Activated CD4-positive, alpha-beta T cell treated with anti-CD3 and anti-CD28 coated beads, Interleukin-2, amount 10 ng/mL, durations not matched to agents 24 days and 14 days (primary cell): ENCODE measurements at regions of chr19 and their contacts with region 1.

Region 1: GRCh38 chr19:7799640-7800355 is 30.2 kb upstream of the EVI5L start:
- DNase-seq: peak; percentile 90
- H3K4me3 Mint-ChIP-seq: no peak overlapping the region
- H3K27ac Mint-ChIP-seq: no peak overlapping the region
- H3K4me1 Mint-ChIP-seq: peaks cover 4% of the 10 kb centered on the region
- H3K27me3 Mint-ChIP-seq: peaks cover 51% of the 10 kb centered on the region

Region 2: GRCh38 chr19:7348587-7349230 is 451.1 kb before region 1 on chr19 and contains the start of gene ARHGEF18:
- intact Hi-C with region 1: loop called (anchors 10 kb)
- DNase-seq: peak; percentile 85
- H3K4me3 Mint-ChIP-seq: peak within 1 kb of the TSS; percentile 94
- H3K27ac Mint-ChIP-seq: peak within 1 kb of the TSS; percentile 95
- H3K4me1 Mint-ChIP-seq: peaks cover 57% of the 10 kb centered on the region
- H3K27me3 Mint-ChIP-seq: no peaks in the 10 kb centered on the region
- total RNA-seq, gene ARHGEF18: 30.6 and 34.8 TPM in 2 replicates

Region 3: GRCh38 chr19:7562646-7563393 is 237.0 kb before region 1 on chr19:
- intact Hi-C with region 1: loop called (anchors 1 kb)
- DNase-seq: peak; percentile 70
- H3K4me3 Mint-ChIP-seq: no peak overlapping the region
- H3K27ac Mint-ChIP-seq: no peak overlapping the region
- H3K4me1 Mint-ChIP-seq: no peaks in the 10 kb centered on the region
- H3K27me3 Mint-ChIP-seq: no peaks in the 10 kb centered on the region

Region 4: DNA sequence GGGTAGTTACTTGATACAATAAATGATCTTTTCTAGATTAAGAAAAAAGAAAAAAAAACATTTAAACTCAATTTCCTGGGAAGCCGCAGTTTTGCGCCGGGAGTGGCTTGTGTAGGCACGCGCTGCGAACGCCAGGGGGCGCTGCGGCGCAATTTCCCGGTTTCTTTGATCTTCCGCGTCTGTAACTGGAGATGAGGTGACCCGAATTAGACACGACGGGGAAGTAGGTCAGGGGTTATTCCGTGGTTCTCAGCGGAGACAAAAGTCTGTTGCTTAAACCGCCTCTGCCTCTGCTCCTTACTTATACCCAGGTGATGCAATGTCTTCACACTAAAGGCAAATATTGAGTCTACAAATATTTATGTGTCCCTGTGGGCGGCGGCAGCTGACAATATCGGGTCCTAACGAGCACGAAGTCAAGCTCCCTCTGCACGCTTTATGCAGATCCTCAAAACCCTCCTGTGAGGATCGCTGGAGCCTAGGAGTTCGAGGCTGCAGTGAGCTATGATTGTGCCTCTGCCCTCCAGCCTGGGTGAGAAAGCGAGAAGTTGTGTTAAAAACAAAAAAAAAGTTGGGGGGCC is 147.6 kb before region 1 on chr19:
- intact Hi-C with region 1: loop called (anchors 1 kb)
- DNase-seq: peak; percentile 96
- H3K4me3 Mint-ChIP-seq: peak overlapping the region; percentile 71
- H3K27ac Mint-ChIP-seq: peak overlapping the region; percentile 80
- H3K4me1 Mint-ChIP-seq: peaks cover 14% of the 10 kb centered on the region
- H3K27me3 Mint-ChIP-seq: peaks cover 2% of the 10 kb centered on the region

Region 5: DNA sequence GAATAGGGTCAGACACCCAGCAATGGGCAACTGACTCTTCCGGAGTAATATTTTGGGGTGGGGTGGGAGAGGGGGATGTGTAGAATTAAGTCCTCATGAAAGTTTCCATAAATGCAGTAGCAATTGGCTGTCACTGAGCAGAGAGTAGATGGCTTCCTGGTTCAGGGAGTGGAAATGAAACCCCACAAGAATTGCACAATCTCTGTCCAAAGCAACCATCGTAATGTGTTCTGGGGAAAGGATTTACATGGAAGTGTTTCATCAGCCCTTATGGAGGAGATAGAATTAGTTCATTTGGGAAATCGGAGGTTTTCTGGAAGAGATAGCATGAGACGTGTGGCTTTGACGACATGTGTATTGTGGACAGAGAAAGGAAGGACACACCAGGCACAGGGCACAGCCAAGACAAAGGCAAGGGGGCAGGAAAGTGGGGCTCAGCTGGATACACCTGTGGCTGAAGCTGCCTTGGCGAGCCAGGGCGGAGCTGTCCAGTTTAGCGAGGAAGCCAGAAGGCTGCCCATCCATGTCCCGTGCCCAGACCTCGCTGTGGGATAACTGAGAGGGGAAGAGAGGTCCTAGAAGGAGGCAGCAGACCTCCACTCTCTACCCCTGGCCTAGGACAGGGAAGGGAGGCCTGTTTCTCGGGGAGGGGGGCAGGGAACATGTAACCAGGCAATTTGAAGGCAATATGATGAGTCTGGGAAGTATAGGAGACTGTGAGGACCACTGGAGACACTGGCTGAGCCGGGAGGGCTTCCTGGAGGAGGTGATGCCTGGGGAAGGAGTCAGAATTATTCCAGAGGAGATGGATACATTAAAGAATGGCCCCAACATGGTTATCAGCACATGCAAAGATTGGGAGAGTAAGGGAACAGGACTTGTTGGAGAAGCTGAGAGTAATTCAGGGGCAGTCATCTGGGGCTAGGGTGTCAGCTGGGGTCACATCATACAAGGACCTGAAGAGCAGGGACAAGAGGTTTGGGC is 65.3 kb before region 1 on chr19:
- intact Hi-C with region 1: loop called (anchors 10 kb)
- DNase-seq: no peak
- H3K4me3 Mint-ChIP-seq: no peak overlapping the region
- H3K27ac Mint-ChIP-seq: no peak overlapping the region
- H3K4me1 Mint-ChIP-seq: no peaks in the 10 kb centered on the region
- H3K27me3 Mint-ChIP-seq: peaks cover 38% of the 10 kb centered on the region